Motor neuron (in vitro differentiated cells): ENCODE measurements at regions of chr3 and their contacts with region 1.

Region 1: DNA sequence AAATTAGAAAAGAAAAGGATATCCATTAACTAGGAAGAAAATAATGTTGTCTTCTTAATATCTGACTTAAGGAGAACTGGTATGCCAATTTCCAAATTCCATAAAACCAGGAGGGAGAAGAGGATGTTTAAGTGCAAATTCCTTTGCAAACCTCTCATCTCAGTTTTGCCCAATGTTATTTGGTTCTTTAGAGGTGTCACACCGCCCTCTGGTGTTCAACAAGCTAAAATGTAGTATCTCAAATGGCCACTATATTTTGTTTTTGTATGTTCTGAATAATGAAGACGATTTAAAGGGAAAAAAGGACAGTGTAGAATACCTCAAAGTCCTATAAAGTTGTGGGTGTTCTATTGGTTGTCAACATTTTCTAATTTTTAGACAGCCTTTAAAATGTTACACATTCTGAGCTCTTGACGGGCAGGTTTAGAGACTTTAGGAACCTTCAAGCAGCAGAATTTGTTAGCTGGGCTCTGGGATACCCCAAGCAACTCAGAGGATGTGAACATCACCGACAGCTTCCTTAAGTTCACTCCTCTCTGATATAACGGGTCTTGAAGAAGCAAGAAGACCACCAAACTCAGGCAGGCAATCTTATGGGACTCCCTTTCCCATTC is 458.3 kb downstream of the MFSD1 start:
- ATAC-seq: peak in 4 of 8 experiments; percentile 30 to 62 (median 47)
- H3K4me3 ChIP-seq: no peak overlapping the region
- H3K27ac ChIP-seq: no peak overlapping the region
- H3K4me1 ChIP-seq: peaks cover 0 to 13% of the 10 kb centered on the region in 2 donors

Region 2: DNA sequence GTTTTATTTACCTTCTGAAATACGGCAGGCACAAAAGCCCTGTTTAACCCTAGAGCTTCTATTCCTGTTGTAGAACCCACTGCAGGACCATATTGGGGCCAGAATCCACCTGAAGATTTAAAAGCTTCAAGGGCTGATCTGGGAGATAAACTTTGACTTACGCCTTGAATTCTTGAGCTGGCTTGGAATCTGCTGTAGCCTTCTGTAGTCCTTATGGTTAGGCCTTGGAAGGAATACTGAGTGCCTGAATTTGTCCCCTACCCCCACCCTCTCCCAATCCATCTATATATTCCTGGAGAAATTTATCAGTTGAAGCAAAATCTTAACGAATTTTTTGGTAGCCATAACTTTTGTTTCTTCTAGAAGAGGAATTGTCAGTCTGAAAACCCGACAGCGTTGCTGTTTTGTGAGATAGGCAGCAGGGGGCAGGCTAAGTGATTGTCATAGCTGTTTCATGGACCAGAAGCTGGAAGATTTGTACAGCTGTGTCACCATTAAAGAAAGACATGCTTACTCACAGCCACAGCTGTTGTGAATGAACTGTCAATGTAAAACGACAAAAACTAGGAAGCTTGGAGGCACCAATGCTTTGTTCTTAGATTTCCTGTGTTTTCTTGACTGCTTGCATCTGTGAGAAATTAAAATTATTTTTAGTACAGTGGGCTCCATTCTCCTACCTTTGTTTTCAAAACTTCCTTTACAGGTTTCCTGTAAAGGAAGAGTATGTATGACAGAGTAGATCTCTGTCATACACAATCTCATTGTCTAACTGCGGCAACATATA is 600.5 kb before region 1 on chr3:
- in situ Hi-C with region 1: loop called in 1 of 9 experiments (anchors 25 kb)
- ATAC-seq: peak in 7 of 8 experiments; percentile 34 to 89 (median 77)
- H3K4me3 ChIP-seq: no peak overlapping the region
- H3K27ac ChIP-seq: no peak overlapping the region
- H3K4me1 ChIP-seq: no peaks in the 10 kb centered on the region

Region 3: GRCh38 chr3:158845765-158846350 is 414.3 kb before region 1 on chr3:
- in situ Hi-C with region 1: loop called (anchors 5 to 25 kb)
- ATAC-seq: peak in 6 of 8 experiments; percentile 27 to 61 (median 45)
- H3K4me3 ChIP-seq: no peak overlapping the region
- H3K27ac ChIP-seq: no peak overlapping the region
- H3K4me1 ChIP-seq: peaks cover 29 to 44% of the 10 kb centered on the region in 2 donors

Region 4: DNA sequence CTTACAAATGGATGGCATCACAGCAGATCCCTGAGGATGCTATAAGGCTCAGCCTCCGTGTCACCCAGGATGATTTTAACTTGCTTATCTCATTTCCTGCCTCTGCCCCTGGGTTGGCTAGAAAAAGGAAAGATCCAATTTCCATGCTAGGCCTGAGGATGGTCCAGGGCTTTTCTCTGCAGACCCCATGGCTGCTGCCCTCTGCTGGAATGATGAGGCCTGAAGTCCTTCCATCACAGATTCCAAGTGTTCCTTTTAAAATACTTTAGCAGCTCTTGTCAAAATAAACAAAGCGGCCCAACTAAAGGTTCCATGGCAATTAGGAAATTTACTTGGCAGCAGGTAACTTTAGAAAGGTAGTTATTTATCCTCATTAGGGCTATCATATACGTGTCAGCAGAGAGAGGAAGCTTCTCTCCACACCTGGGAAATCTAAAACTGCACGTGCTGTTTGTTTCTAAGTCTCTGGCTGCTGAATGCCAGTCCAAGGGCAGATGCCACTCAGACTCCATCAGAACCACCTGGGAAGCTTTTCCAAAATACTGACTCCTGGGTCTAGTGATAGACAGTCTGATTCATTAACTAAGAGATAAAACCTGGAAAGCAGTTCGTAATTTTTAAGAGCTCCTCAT is 326.5 kb after region 1 on chr3:
- in situ Hi-C with region 1: loop called in 1 of 9 experiments (anchors 25 kb)
- ATAC-seq: peak; percentile 47 to 97 (median 70)
- H3K4me3 ChIP-seq: no peak overlapping the region
- H3K27ac ChIP-seq: no peak overlapping the region
- H3K4me1 ChIP-seq: peaks cover 3 to 5% of the 10 kb centered on the region in 2 donors

Region 5: GRCh38 chr3:159654186-159655134 is 394.3 kb after region 1 on chr3:
- in situ Hi-C with region 1: no loop called
- ATAC-seq: no peak
- H3K4me3 ChIP-seq: no peak overlapping the region
- H3K27ac ChIP-seq: no peak overlapping the region
- H3K4me1 ChIP-seq: peaks cover 4 to 7% of the 10 kb centered on the region in 2 donors

Region 6: GRCh38 chr3:159763602-159764489 is 503.7 kb after region 1 on chr3:
- in situ Hi-C with region 1: no loop called
- ATAC-seq: peak; percentile 38 to 80 (median 72)
- H3K4me3 ChIP-seq: peak overlapping the region; percentile 53 to 80 (median 62)
- H3K27ac ChIP-seq: peak overlapping the region in 1 of 2 donors; percentile 17
- H3K4me1 ChIP-seq: peaks cover 6 to 8% of the 10 kb centered on the region in 2 donors

Region 7: GRCh38 chr3:160003520-160004128 is 743.5 kb after region 1 on chr3:
- in situ Hi-C with region 1: loop called in 3 of 9 experiments (anchors 25 kb)
- ATAC-seq: peak in 4 of 8 experiments; percentile 63 to 84 (median 74)
- H3K4me3 ChIP-seq: no peak overlapping the region
- H3K27ac ChIP-seq: no peak overlapping the region
- H3K4me1 ChIP-seq: no peaks in the 10 kb centered on the region